Heart right ventricle (tissue), 16 donors: ENCODE measurements at regions of chr17 and their contacts with region 1.

Region 1: DNA sequence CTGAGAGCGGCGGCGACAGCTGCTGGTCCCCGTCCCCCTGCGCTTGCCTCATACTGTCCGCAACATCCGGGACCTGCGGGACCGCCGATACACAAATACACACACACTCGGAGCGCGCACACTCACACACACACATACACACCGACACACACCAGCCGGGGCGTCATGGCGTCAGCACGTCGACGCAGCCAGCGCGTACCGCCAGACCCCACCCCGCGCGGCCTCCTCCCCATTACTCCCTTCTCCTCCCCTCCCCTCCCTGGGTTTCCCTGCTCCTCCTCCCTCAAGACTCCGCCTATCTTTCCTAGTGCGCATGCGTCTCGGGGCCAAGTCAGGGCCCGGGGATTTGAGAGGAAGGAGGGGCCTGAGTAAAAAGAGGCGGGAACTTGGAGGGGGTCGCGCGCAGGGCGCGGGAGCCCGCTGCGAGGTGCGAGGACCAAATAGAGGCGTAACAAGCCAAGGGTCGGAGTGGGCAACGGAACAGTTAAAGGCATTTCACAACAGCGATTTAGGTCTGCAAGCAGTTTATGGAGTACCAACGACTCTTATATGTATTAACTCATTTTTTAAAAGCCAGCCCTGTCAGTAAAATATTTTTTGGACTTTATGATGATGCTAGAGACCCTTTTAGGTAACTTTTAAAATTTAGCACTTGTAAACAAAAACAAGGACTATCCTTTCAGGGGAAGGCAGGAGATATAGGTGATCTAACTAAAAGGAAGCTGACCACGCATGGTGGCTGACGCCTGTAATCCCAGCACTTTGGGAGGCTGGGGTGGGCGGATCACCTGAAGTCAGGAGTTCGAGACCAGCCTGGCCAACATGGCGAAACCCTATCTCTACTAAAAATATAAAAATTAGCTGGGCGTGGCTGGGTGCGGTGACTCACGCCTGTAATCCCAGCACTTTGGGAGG is at the start of gene SPOP:
- DNase-seq: peak; percentile 99 to 100
- ATAC-seq: peak; percentile 97 to 99 (median 98)
- H3K4me3 ChIP-seq: peak within 1 kb of the TSS; percentile 65 to 82 (median 72)
- H3K27ac ChIP-seq: peak within 1 kb of the TSS; percentile 93 to 98 (median 97)
- H3K4me1 ChIP-seq: peaks cover 0 to 53% (median 40%) of the 10 kb centered on the region in 9 donors
- H3K27me3 ChIP-seq: no peaks in the 10 kb centered on the region
- CTCF ChIP-seq: no peak
- total RNA-seq, gene SPOP: 39.8 to 79.9 (median 67.7) TPM

Region 2: DNA sequence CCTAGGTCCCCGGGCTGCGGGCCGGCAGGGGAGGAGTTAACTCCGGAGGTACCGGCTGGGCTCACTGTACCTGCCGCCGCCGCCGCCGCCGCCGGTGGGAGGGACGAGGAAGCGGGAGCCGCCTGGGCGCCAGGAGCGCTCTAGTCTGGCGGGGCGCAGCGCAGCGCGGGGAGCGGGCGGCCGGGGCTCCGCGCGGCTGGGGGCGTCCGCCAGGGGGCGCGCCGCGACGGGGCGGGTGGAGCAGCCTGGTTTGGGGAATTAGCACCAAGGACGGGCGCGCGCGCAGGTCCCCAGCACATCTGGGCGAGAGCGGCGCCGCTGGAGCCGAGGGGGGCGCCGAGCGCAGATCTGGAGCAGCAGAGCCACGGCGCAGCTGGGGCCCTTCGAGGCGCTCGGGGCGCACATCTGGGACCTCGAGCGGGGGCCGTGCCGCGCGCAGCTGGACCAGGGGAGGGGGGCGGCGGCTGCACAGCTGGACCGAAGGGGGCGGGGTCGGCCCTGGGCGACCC is 102.6 kb before region 1 on chr17 and contains the start of gene NXPH3:
- intact Hi-C with region 1: loop called in 2 of 10 experiments (anchors 5 kb)
- DNase-seq: peak; percentile 62 to 81
- ATAC-seq: peak; percentile 22 to 80 (median 44)
- H3K4me3 ChIP-seq: peak within 1 kb of the TSS; percentile 56 to 79 (median 74)
- H3K27ac ChIP-seq: peak within 1 kb of the TSS in 9 of 10 donors; percentile 17 to 84 (median 61)
- H3K4me1 ChIP-seq: peaks cover 6 to 48% (median 21%) of the 10 kb centered on the region in 9 donors
- H3K27me3 ChIP-seq: peaks cover 0 to 41% (median 0%) of the 10 kb centered on the region in 7 donors
- CTCF ChIP-seq: peak in 8 of 9 donors; percentile 35 to 83 (median 68)
- total RNA-seq, gene NXPH3: 2.2 to 4.4 (median 3.2) TPM

Region 3: DNA sequence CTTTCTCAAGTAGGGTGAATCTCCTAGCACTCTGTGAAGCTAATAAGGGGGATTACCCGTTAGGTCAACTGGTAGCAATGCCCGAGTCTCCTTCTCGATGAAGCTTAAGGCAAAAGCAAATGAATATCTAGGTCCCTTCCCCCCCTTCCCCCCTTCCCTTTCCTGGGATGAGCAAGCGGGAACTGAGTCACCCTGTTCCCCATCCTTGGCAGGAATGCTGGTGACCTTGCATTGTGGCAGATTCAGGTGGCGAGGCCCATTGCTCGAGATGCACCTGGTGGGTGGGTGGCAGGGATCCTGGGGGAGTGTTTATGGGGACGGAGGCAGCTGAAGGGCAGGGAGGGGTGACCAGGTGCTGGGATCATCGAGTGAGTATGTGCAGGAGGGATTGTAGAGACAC is 95.4 kb before region 1 on chr17:
- intact Hi-C with region 1: loop called in 1 of 10 experiments (anchors 5 kb)
- DNase-seq: no peak
- ATAC-seq: no peak
- H3K4me3 ChIP-seq: no peak overlapping the region
- H3K27ac ChIP-seq: no peak overlapping the region
- H3K4me1 ChIP-seq: peaks cover 0 to 28% (median 5%) of the 10 kb centered on the region in 9 donors
- H3K27me3 ChIP-seq: peaks cover 0 to 8% (median 0%) of the 10 kb centered on the region in 7 donors
- CTCF ChIP-seq: no peak

Region 4: DNA sequence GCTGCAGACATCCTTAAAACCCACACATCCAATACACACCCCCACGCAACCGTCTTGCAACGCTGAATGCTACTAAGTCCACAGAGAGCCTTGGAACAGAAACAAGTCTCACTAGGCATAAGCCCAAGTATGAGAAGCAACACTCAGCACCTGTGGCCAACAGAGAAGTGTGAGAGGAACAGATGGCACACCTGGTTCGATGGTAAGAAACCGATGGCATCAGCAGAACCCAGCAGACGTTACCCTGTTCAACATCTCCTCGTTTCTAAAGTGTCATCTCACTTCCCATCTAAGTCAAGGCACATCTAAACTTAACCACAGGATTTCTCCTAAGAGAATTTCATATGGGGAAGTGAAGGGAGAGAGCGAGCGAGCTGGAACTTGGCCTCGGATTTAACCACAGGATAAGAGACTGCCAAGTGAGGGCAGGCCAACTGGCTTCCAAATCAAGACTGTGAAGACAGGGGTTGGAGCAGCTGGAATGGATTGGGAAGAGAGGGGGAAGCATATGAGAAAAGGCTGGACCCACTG is 61.5 kb before region 1 on chr17:
- intact Hi-C with region 1: loop called in 5 of 10 experiments (anchors 5 to 10 kb)
- DNase-seq: peak; percentile 65 to 74
- ATAC-seq: peak; percentile 81 to 92 (median 84)
- H3K4me3 ChIP-seq: peak overlapping the region in 1 of 10 donors; percentile 3
- H3K27ac ChIP-seq: peak overlapping the region in 9 of 10 donors; percentile 2 to 70 (median 59)
- H3K4me1 ChIP-seq: peaks cover 4 to 70% (median 42%) of the 10 kb centered on the region in 9 donors
- H3K27me3 ChIP-seq: no peaks in the 10 kb centered on the region
- CTCF ChIP-seq: no peak

Region 5: GRCh38 chr17:49624896-49625295 is 53.3 kb before region 1 on chr17:
- intact Hi-C with region 1: loop called in 2 of 10 experiments (anchors 5 to 10 kb)
- DNase-seq: no peak
- ATAC-seq: peak in 1 of 8 donors; percentile 55
- H3K4me3 ChIP-seq: no peak overlapping the region
- H3K27ac ChIP-seq: no peak overlapping the region
- H3K4me1 ChIP-seq: peaks cover 5 to 82% (median 66%) of the 10 kb centered on the region in 9 donors
- H3K27me3 ChIP-seq: no peaks in the 10 kb centered on the region
- CTCF ChIP-seq: no peak

Region 6: DNA sequence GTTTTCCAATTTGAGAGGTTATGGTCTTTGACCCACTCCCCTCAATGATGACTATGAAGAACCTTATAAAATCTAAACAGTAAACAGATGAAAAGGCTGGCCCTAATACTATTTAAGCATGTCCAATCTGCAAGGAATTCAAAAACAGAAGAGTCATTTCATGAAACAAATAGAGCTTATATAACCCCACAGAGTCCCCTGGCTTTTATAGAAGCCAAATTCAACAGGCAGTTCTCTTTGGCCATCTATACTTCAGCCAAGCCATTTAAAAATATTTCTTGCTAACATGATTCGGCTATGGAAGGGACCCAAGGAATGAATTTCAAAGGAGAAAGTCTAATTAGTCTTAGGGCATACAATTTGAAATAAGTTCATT is 43.7 kb before region 1 on chr17:
- intact Hi-C with region 1: loop called in 2 of 10 experiments (anchors 5 to 10 kb)
- DNase-seq: no peak
- ATAC-seq: peak in 6 of 8 donors; percentile 24 to 80 (median 44)
- H3K4me3 ChIP-seq: no peak overlapping the region
- H3K27ac ChIP-seq: peak overlapping the region; percentile 57 to 89 (median 73)
- H3K4me1 ChIP-seq: peaks cover 10 to 97% (median 79%) of the 10 kb centered on the region in 9 donors
- H3K27me3 ChIP-seq: no peaks in the 10 kb centered on the region
- CTCF ChIP-seq: no peak

Region 7: GRCh38 chr17:49640556-49640955 is 37.6 kb before region 1 on chr17:
- intact Hi-C with region 1: loop called in 1 of 10 experiments (anchors 5 kb)
- DNase-seq: no peak
- ATAC-seq: no peak
- H3K4me3 ChIP-seq: no peak overlapping the region
- H3K27ac ChIP-seq: peak overlapping the region in 1 of 10 donors; percentile 13
- H3K4me1 ChIP-seq: peaks cover 0 to 82% (median 42%) of the 10 kb centered on the region in 9 donors
- H3K27me3 ChIP-seq: no peaks in the 10 kb centered on the region
- CTCF ChIP-seq: no peak

Region 8: GRCh38 chr17:49843774-49844350 is 165.7 kb after region 1 on chr17:
- intact Hi-C with region 1: no loop called
- DNase-seq: no peak
- ATAC-seq: no peak
- H3K4me3 ChIP-seq: no peak overlapping the region
- H3K27ac ChIP-seq: peak overlapping the region in 3 of 10 donors; percentile 85 to 91 (median 89)
- H3K4me1 ChIP-seq: peaks cover 8 to 44% (median 35%) of the 10 kb centered on the region in 9 donors
- H3K27me3 ChIP-seq: no peaks in the 10 kb centered on the region
- CTCF ChIP-seq: peak in 5 of 9 donors; percentile 14 to 34 (median 29)